Vagina (tissue), 2 donors: ENCODE measurements at regions of chrX and their contacts with region 1.

Region 1: DNA sequence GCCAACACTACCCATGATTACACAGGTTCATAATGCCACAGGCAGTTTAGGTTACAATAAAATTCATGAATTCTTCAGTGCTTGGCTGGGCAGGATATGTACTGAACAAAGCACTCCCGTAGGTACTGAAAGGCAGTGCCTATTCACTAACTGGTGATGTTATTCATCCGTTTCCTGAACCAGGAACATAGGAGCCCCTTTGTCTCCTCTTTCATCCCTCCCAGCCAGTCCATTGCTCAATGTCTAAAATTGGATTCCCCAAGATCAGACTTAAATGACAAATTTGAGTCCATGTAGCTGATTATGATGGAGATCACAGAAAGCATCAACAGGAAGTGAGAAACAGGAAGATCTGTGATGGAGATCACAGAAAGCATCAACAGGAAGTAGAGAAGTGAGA is 244.4 kb downstream of the DMD start:
- DNase-seq: no peak
- H3K4me3 ChIP-seq: no peak overlapping the region
- H3K27ac ChIP-seq: no peak overlapping the region
- H3K4me1 ChIP-seq: no peaks in the 10 kb centered on the region
- H3K27me3 ChIP-seq: no peaks in the 10 kb centered on the region
- CTCF ChIP-seq: no peak
- POLR2A ChIP-seq: no peak

Region 2: GRCh38 chrX:32929040-32929439 is 37.9 kb before region 1 on chrX:
- intact Hi-C with region 1: loop called (anchors 10 kb)
- DNase-seq: no peak
- H3K4me3 ChIP-seq: no peak overlapping the region
- H3K27ac ChIP-seq: no peak overlapping the region
- H3K4me1 ChIP-seq: no peaks in the 10 kb centered on the region
- H3K27me3 ChIP-seq: no peaks in the 10 kb centered on the region
- CTCF ChIP-seq: no peak
- POLR2A ChIP-seq: no peak

Region 3: DNA sequence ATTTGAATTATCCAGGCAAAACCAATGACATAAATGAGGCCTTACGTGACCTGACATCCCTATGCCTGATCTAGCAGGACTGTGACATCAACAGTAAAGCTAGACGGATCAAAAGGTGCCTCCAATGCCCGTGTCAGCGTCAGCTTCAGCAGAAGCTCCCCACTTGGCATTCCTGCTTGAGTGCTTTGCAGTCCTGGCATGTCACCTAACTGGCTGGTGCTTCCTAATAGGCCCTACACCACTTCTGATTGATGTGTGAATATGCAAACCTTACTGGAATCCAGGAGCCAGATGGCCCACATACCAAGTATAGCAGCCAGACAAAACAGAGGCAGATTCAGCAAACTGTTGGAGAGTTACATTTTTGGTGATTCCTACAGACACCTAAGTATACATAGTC is 20.2 kb after region 1 on chrX:
- intact Hi-C with region 1: no loop called
- DNase-seq: no peak
- H3K4me3 ChIP-seq: no peak overlapping the region
- H3K27ac ChIP-seq: no peak overlapping the region
- H3K4me1 ChIP-seq: no peaks in the 10 kb centered on the region
- H3K27me3 ChIP-seq: no peaks in the 10 kb centered on the region
- CTCF ChIP-seq: no peak
- POLR2A ChIP-seq: no peak

Region 4: DNA sequence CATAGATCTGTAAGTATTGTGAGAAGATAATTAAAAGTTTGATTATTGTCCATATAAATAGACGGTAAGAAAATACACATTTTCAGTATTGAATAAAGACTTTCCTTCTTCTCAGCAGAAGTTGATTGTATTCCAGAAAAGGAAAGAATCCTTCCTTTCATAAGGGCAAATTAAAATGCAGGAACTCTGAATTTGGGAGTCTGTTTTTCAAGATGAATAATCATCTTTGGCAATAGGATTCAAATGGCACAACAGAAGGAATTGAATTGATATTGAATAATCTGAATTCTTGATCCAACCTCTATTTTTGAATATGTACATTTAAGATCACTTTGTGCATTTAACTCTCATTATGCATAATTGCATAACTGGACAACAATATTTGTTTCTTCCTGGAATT is 95.1 kb after region 1 on chrX:
- intact Hi-C with region 1: no loop called
- DNase-seq: no peak
- H3K4me3 ChIP-seq: no peak overlapping the region
- H3K27ac ChIP-seq: no peak overlapping the region
- H3K4me1 ChIP-seq: no peaks in the 10 kb centered on the region
- H3K27me3 ChIP-seq: no peaks in the 10 kb centered on the region
- CTCF ChIP-seq: no peak
- POLR2A ChIP-seq: no peak